WTC11 (cell line): ENCODE measurements at regions of chr10 and their contacts with region 1.

Region 1: DNA sequence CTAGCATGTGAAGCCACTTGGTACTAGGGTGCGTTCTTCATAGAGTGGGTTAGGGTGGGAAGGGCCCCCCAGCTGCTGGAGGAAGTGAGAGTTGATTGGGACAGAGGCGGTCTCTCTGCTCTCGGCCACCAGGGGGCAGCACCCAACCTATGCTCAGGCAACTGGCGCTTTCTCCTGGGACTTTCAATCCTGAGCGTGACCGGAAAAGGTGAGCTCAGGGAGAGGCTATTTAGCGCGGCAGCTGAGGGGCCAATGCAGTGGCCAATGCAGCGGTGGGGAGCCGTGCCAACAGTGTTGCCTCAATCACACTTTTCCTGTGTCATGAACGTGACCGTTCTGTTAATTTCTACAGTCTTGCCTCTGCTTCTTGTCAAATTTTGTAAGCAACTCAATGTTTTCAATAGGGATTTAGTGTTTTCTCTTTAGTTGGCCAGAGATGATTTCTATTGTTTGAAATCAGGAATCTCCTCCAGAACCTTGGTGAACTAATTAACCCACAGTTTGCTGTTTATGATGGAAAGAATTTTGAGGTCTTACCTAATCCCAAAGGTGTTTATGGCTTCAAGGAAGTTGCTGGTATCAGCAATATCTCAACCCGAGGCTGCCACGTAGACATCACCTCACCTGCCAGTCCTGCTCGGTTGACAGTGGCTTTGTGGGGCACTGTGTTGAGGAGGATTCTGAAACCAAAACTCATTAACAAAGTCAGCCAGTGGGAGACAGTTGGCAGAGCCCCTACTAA is 67.9 kb upstream of the PDZD8 start:
- DNase-seq: peak; percentile 91
- ATAC-seq: peak; percentile 96
- H3K4me3 Mint-ChIP-seq: no peak overlapping the region
- H3K27ac Mint-ChIP-seq: no peak overlapping the region
- H3K4me1 Mint-ChIP-seq: no peaks in the 10 kb centered on the region; the same call in 1 of the 2 replicates
- H3K27me3 Mint-ChIP-seq: peaks cover 30% of the 10 kb centered on the region
- CTCF ChIP-seq: peak; percentile 98

Region 2: GRCh38 chr10:117370205-117370604 is 72.9 kb before region 1 on chr10:
- CTCF ChIA-PET with region 1: interaction called, 15 read pairs
- POLR2A ChIA-PET with region 1: no interaction called
- DNase-seq: no peak
- ATAC-seq: no peak
- H3K4me3 Mint-ChIP-seq: no peak overlapping the region; the same call in 1 of the 2 replicates
- H3K27ac Mint-ChIP-seq: peak overlapping the region; percentile 62; the same call in 1 of the 2 replicates
- H3K4me1 Mint-ChIP-seq: peaks cover 51% of the 10 kb centered on the region
- H3K27me3 Mint-ChIP-seq: peaks cover 4% of the 10 kb centered on the region; the same call in 1 of the 2 replicates
- CTCF ChIP-seq: no peak

Region 3: GRCh38 chr10:117419921-117420320 is 23.2 kb before region 1 on chr10:
- CTCF ChIA-PET with region 1: interaction called, 36 read pairs
- POLR2A ChIA-PET with region 1: interaction called, 7 read pairs
- DNase-seq: no peak
- ATAC-seq: no peak
- H3K4me3 Mint-ChIP-seq: no peak overlapping the region
- H3K27ac Mint-ChIP-seq: no peak overlapping the region
- H3K4me1 Mint-ChIP-seq: peaks cover 10% of the 10 kb centered on the region
- H3K27me3 Mint-ChIP-seq: peaks cover 4% of the 10 kb centered on the region
- CTCF ChIP-seq: no peak

Region 4: DNA sequence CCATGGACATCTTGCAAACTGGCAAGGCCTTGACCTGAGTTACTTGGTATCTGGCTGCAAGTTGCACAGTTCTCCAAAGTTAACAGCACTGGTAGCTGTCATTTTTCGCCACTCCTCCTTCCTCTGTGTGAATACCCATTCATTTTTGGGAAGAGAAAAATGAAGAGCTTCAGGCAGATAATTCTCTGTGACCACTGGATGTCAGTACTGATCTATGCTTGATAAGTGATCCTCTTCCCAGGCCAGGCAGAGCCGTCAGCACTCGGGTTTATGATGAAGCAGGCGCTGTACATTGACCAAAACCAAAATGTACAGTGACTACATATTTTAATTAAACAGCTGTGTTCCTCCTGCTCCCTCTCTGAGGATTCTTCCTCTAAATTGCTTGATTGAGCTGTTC is 12.0 kb before region 1 on chr10:
- CTCF ChIA-PET with region 1: interaction called, 96 read pairs
- POLR2A ChIA-PET with region 1: no interaction called
- DNase-seq: no peak
- ATAC-seq: no peak
- H3K4me3 Mint-ChIP-seq: no peak overlapping the region
- H3K27ac Mint-ChIP-seq: no peak overlapping the region
- H3K4me1 Mint-ChIP-seq: peaks cover 24% of the 10 kb centered on the region
- H3K27me3 Mint-ChIP-seq: peaks cover 10% of the 10 kb centered on the region
- CTCF ChIP-seq: no peak

Region 5: GRCh38 chr10:117477961-117478670 is 35.0 kb after region 1 on chr10:
- CTCF ChIA-PET with region 1: interaction called, 30 read pairs
- POLR2A ChIA-PET with region 1: no interaction called
- DNase-seq: no peak
- ATAC-seq: no peak
- H3K4me3 Mint-ChIP-seq: no peak overlapping the region
- H3K27ac Mint-ChIP-seq: no peak overlapping the region
- H3K4me1 Mint-ChIP-seq: no peaks in the 10 kb centered on the region; the same call in 1 of the 2 replicates
- H3K27me3 Mint-ChIP-seq: peaks cover 22% of the 10 kb centered on the region
- CTCF ChIP-seq: no peak

Region 6: GRCh38 chr10:117537436-117537903 is 94.4 kb after region 1 on chr10:
- CTCF ChIA-PET with region 1: interaction called, 16 read pairs
- POLR2A ChIA-PET with region 1: no interaction called
- DNase-seq: peak; percentile 43
- ATAC-seq: peak; percentile 10
- H3K4me3 Mint-ChIP-seq: peak overlapping the region; percentile 50
- H3K27ac Mint-ChIP-seq: no peak overlapping the region
- H3K4me1 Mint-ChIP-seq: peaks cover 26% of the 10 kb centered on the region
- H3K27me3 Mint-ChIP-seq: peaks cover 100% of the 10 kb centered on the region
- CTCF ChIP-seq: peak; percentile 60

Region 7: GRCh38 chr10:117590101-117590875 is 147.2 kb after region 1 on chr10:
- CTCF ChIA-PET with region 1: no interaction called
- POLR2A ChIA-PET with region 1: no interaction called
- DNase-seq: no peak
- ATAC-seq: no peak
- H3K4me3 Mint-ChIP-seq: no peak overlapping the region
- H3K27ac Mint-ChIP-seq: no peak overlapping the region
- H3K4me1 Mint-ChIP-seq: no peaks in the 10 kb centered on the region
- H3K27me3 Mint-ChIP-seq: no peaks in the 10 kb centered on the region
- CTCF ChIP-seq: no peak

Region 8: DNA sequence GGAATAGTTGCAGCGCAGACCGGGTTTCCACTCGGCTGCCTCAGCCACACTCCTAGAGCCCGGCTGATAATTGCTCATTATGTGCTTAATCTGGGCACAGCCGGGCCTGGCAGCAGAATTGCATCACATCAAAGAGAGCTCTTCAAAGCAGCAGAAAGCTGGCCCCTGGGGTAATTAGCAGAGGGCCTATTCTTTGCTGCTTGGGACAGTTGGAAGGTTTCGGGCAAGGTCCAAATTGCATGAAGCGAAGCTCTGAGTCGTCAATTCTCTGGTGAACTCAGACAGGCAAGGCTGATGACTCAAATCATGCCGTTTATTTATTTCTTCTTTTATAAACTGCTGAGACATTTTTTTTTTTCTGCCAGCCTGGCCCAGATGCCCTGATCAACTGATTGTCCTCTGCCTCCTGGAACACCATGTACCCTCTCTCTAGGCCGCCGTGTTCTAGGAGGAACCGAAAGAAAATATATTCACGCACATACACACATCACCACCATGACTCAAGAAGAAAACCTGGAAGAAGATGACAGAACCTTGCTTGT is 361.4 kb after region 1 on chr10:
- CTCF ChIA-PET with region 1: no interaction called
- POLR2A ChIA-PET with region 1: no interaction called
- DNase-seq: no peak
- ATAC-seq: no peak
- H3K4me3 Mint-ChIP-seq: no peak overlapping the region
- H3K27ac Mint-ChIP-seq: no peak overlapping the region
- H3K4me1 Mint-ChIP-seq: peaks cover 13% of the 10 kb centered on the region
- H3K27me3 Mint-ChIP-seq: no peaks in the 10 kb centered on the region; the same call in 1 of the 2 replicates
- CTCF ChIP-seq: no peak